ENCODE measurements at regions of chr5 and their contacts with region 1.

Region 1: DNA sequence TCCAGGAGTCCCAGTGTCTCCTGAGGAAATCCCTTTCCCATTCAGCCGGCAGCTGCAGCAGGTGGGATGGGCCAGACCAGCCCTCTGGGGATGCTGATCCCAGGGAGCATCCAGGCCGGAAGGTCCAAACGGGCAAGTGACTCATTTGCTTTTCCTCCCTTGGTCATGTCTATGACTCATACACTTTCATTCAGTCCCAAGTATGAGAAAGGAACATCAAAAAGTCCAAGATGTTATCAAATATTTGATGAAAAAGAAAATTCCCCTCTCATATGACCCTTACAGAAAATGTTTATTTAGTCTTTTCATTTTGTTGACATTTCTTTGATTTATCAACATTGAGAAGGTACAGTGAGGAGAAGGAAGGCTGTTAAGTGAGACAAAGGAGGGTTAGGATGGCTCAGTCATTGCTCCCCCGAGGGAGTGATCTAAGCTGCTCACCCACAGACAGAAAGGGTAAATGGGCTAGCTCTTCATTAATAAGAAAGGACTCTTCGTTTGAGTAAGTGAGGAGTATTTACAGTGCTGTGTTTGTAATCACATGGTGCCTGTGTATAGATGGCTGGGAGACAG is 117.6 kb upstream of the ANKRD55 start:
- DNase-seq: peak; percentile 81 to 94
- H3K4me3 ChIP-seq: no peak overlapping the region; the same call in 1 of the 2 replicates
- H3K27ac ChIP-seq: peak overlapping the region; percentile 76
- H3K4me1 ChIP-seq: peaks cover 73% of the 10 kb centered on the region
- H3K27me3 ChIP-seq: no peaks in the 10 kb centered on the region
- CTCF ChIP-seq: no peak

Region 2: DNA sequence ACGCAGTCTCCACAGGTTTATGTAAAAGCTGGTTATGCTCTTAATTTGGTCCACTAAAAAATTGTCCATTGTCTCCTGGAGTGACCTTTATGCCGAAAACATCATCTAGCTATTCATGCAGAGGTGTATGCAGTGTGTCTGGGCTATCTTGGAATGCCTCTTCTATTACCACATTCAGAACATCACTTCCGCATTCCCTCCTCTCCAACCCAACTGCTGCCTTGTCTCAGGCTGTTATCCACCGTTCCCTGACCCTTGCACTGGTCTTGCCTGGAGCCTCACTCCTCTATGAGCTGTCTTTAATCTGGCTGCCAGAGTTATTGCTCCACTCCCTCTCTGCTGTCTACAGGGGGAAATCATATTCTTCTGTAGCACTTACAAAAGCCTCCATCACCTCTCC is 96.5 kb after region 1 on chr5:
- CTCF ChIA-PET with region 1: interaction called, 4 read pairs
- POLR2A ChIA-PET with region 1: no interaction called
- intact Hi-C with region 1: loop called (anchors 2 kb)
- DNase-seq: peak; percentile 75 to 96
- H3K4me3 ChIP-seq: no peak overlapping the region
- H3K27ac ChIP-seq: peak overlapping the region; percentile 79
- H3K4me1 ChIP-seq: peaks cover 32% of the 10 kb centered on the region
- H3K27me3 ChIP-seq: no peaks in the 10 kb centered on the region
- CTCF ChIP-seq: no peak

Region 3: GRCh38 chr5:56534032-56534829 is 183.5 kb after region 1 on chr5:
- CTCF ChIA-PET with region 1: no interaction called
- POLR2A ChIA-PET with region 1: no interaction called
- intact Hi-C with region 1: loop called (anchors 2 kb)
- DNase-seq: peak; percentile 72 to 89
- H3K4me3 ChIP-seq: no peak overlapping the region
- H3K27ac ChIP-seq: peak overlapping the region; percentile 66
- H3K4me1 ChIP-seq: peaks cover 29% of the 10 kb centered on the region
- H3K27me3 ChIP-seq: no peaks in the 10 kb centered on the region
- CTCF ChIP-seq: no peak

Region 4: GRCh38 chr5:56638061-56638621 is 287.5 kb after region 1 on chr5:
- CTCF ChIA-PET with region 1: no interaction called
- POLR2A ChIA-PET with region 1: no interaction called
- intact Hi-C with region 1: loop called (anchors 10 kb)
- DNase-seq: peak; percentile 64 to 70
- H3K4me3 ChIP-seq: no peak overlapping the region
- H3K27ac ChIP-seq: no peak overlapping the region
- H3K4me1 ChIP-seq: peaks cover 40% of the 10 kb centered on the region
- H3K27me3 ChIP-seq: no peaks in the 10 kb centered on the region
- CTCF ChIP-seq: no peak

Measured in PC-9 (cell line).